Activated T-helper 1 cell treated with anti-CD3 and anti-CD28 coated beads, Interleukin-12 subunit alpha, Interleukin-12 subunit beta, Interleukin-2, Interleukin-4 antibody, amounts not matched to agents 30 ng/mL and 10 ng/mL and 1 ng/mL, durations not matched to agents 14 hours and 24 hours and 36 hours (primary cell): ENCODE measurements at regions of chr9 and their contacts with region 1.

Region 1: DNA sequence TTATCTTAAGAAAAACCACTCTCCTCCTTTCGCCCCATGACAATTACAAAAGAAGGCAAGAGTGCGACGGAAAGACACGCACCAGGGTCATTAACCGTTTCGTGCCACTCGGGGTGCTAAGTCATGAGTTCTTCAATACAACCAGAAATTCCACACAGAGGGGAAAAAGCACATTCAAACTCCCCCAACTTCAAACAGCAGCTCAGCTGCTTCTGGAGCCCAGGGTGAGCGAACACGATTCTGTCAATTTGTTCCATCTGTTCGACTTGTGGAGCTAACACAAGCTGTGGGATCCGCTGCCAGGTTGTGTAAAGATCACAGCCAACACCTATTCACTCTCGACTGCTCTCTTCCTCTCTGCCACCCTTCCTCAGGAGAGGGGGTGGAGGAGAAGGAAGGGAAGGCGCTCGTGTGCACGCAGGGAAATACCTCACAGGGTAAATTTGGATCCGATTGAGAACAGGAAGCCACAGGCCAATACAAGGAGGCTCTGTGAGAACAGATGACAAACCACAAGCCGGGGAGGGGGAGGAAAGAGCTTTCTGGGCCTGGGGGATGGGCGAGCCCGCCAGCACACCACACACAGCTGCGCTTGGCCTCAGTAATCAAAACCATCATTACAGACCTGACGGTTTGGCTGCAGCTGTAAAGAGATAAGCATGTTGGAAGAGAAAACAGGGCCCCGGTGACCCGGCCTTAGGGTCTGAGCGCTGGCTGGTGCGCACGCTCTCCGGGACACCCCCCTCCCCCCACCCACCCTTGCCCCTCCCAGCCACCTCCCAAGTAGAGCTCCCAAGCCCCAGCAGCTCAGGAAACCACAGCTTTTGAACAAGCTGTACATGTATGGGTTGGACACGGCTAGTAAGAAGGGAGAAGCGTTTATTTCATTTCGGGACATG is 54.3 kb downstream of the PTCH1 start:
- DNase-seq: peak; percentile 78
- H3K4me3 Mint-ChIP-seq: peak overlapping the region; percentile 77
- H3K27ac Mint-ChIP-seq: peak overlapping the region; percentile 82
- H3K4me1 Mint-ChIP-seq: peaks cover 34% of the 10 kb centered on the region
- H3K27me3 Mint-ChIP-seq: peaks cover 53% of the 10 kb centered on the region

Region 2: GRCh38 chr9:95167998-95168397 is 294.5 kb before region 1 on chr9:
- intact Hi-C with region 1: loop called (anchors 5 kb)
- DNase-seq: peak; percentile 47
- H3K4me3 Mint-ChIP-seq: peak overlapping the region; percentile 3
- H3K27ac Mint-ChIP-seq: peak overlapping the region; percentile 61
- H3K4me1 Mint-ChIP-seq: peaks cover 48% of the 10 kb centered on the region
- H3K27me3 Mint-ChIP-seq: no peaks in the 10 kb centered on the region

Region 3: GRCh38 chr9:95425910-95426551 is 36.5 kb before region 1 on chr9:
- intact Hi-C with region 1: loop called (anchors 2 kb)
- DNase-seq: no peak
- H3K4me3 Mint-ChIP-seq: peak overlapping the region; percentile 56
- H3K27ac Mint-ChIP-seq: no peak overlapping the region
- H3K4me1 Mint-ChIP-seq: peaks cover 11% of the 10 kb centered on the region
- H3K27me3 Mint-ChIP-seq: peaks cover 5% of the 10 kb centered on the region

Region 4: GRCh38 chr9:95477441-95477840 is 14.9 kb after region 1 on chr9:
- intact Hi-C with region 1: no loop called
- DNase-seq: no peak
- H3K4me3 Mint-ChIP-seq: no peak overlapping the region
- H3K27ac Mint-ChIP-seq: no peak overlapping the region
- H3K4me1 Mint-ChIP-seq: peaks cover 6% of the 10 kb centered on the region
- H3K27me3 Mint-ChIP-seq: peaks cover 7% of the 10 kb centered on the region

Region 5: DNA sequence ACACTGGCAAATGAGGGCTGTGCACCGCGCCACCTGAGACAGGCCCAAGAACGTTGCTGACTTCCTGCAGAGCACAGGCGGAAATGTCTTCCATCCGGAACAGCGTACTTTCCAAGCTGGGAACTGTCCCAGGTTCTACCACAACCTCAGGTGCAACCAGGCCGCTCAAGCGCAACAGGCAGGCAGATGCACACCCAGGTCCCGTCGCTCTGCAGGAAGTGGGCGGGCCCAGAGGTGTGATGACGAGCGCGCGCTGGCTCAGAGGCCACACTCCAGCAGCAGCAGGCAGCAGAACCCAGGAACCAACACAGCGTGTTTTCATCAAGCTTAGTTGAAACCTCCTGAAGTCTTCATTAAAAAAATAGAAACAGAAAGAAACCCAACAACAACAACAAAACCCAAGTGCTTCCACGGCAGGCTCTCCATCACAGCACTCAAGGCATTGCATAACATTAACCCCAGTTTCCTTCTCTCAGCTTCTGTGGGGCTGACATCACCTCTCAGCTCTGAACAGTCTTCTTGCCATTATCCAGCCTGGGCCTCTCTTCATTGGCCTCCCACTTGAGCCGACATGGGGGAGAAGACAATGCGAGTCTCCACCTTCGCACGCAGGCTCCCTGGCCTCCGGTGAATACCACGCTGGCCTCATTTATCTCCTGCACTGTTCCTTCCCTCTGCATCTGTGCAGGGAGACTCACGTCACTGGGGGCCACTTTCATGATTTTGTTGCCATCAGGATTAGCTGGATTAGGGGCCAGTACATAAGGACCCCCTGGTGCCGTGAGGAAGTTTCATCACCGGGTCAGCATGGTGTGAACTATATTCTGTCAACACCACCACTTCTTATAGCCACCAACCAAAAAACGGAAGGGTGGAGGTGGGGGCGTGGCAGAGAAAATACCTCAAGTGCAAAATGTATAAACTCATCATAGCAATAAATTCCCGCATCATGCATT is 32.2 kb after region 1 on chr9:
- intact Hi-C with region 1: loop called (anchors 1 kb)
- DNase-seq: peak; percentile 81
- H3K4me3 Mint-ChIP-seq: peak overlapping the region; percentile 81
- H3K27ac Mint-ChIP-seq: peak overlapping the region; percentile 86
- H3K4me1 Mint-ChIP-seq: peaks cover 40% of the 10 kb centered on the region
- H3K27me3 Mint-ChIP-seq: peaks cover 31% of the 10 kb centered on the region

Region 6: DNA sequence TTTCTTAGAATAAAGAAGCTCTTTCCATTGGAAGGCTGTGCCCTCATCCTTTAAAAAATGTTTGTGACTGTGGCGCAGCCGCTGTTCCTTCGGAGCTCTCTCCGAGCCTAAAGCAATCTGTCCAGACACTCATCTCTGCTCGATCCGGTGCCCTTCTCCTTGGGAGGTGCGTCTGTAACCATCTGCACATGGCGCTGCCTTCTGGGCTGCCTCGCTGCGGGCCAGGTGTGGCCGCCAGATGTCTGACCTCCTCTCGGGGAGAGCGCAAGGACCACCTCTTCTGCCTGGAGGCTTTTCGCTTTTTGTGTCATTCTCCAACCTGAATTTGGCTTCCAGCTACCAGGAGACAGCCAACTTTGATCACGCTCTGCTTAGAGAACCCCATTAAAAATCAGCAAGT is 207.6 kb after region 1 on chr9:
- intact Hi-C with region 1: no loop called
- DNase-seq: no peak
- H3K4me3 Mint-ChIP-seq: no peak overlapping the region
- H3K27ac Mint-ChIP-seq: no peak overlapping the region
- H3K4me1 Mint-ChIP-seq: no peaks in the 10 kb centered on the region
- H3K27me3 Mint-ChIP-seq: peaks cover 31% of the 10 kb centered on the region